Common myeloid progenitor, CD34-positive (primary cell): ENCODE measurements at regions of chr2 and their contacts with region 1.

Region 1: DNA sequence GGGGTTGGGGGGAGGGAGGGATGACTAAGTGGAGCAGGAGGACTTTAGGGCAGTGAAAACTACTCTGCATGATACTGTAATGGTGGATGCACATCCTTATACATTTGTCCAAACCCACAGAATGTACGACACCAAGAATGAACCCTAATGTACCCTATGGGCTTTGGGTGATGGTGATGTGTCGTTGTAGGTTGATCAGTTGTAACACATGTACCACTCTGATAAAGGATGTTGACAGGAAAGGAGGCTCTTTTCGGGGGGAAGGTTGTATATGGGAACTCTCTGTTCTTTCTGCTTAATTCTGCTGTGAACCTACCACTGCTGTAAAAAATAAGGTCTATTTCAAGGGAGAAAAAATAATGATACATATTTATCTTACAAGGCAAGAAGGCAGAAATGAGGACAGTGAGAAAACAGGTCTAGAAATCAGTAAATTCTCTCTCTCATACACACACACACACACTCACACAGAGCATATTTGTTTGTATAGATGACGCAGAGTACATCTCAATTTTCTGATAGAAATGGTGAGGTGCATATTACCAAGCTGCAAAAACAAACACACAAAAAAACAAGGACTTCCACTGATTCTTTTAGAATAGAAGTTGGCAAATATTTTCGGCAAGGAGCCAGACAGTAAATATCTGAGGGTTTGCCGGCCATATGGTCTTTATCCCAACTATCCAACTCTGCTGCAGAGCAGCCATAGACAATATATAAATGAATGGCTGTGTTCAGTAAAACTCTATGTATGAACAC is 20.2 kb downstream of the FAM124B start:
- DNase-seq: peak in 1 of 3 donors; percentile 46
- H3K4me3 ChIP-seq: no peak overlapping the region
- H3K27ac ChIP-seq: no peak overlapping the region
- H3K4me1 ChIP-seq: peaks cover 10 to 46% (median 23%) of the 10 kb centered on the region in 4 experiments
- H3K27me3 ChIP-seq: no peaks in the 10 kb centered on the region

Region 2: GRCh38 chr2:224211791-224212190 is 169.9 kb before region 1 on chr2:
- CTCF ChIA-PET with region 1: no interaction called
- POLR2A ChIA-PET with region 1: no interaction called
- DNase-seq: no peak
- H3K4me3 ChIP-seq: no peak overlapping the region
- H3K27ac ChIP-seq: no peak overlapping the region
- H3K4me1 ChIP-seq: no peaks in the 10 kb centered on the region
- H3K27me3 ChIP-seq: peaks cover 0 to 1% (median 0%) of the 10 kb centered on the region in 5 experiments

Region 3: DNA sequence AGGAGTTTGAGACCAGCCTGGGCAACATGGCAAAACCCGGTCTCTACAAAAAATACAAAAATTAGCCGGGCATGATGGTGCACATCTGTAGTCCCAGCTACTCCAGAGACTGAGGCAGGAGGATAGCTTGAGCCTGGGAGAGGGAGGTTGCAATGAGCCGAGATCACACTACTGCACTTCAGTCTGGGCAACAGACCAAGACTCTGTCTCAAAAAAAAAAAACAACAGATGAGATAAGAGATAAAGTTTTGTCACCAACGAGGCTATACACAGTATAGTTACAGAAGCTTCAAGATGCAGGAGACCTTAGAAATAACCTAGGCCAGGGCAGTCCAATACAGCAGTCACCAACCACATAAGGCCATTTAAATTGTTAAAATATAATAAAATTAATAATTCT is 10.8 kb after region 1 on chr2:
- CTCF ChIA-PET with region 1: interaction called, 28 read pairs
- POLR2A ChIA-PET with region 1: no interaction called
- DNase-seq: peak in 1 of 3 donors; percentile 22
- H3K4me3 ChIP-seq: no peak overlapping the region
- H3K27ac ChIP-seq: no peak overlapping the region
- H3K4me1 ChIP-seq: peaks cover 0 to 31% (median 10%) of the 10 kb centered on the region in 4 experiments
- H3K27me3 ChIP-seq: no peaks in the 10 kb centered on the region